ENCODE measurements at regions of chr3 and their contacts with region 1.

Region 1: GRCh38 chr3:197674741-197675562 is 61.8 kb downstream of the RUBCN start:
- DNase-seq: no peak
- H3K4me3 ChIP-seq: no peak overlapping the region
- H3K27ac ChIP-seq: no peak overlapping the region
- H3K4me1 ChIP-seq: no peaks in the 10 kb centered on the region
- H3K27me3 ChIP-seq: no peaks in the 10 kb centered on the region
- CTCF ChIP-seq: no peak

Region 2: GRCh38 chr3:196942226-196942914 is 732.6 kb before region 1 on chr3 and contains the start of gene NCBP2:
- CTCF ChIA-PET with region 1: no interaction called
- dilution Hi-C with region 1: loop called (anchors 10 kb)
- in situ Hi-C with region 1: no loop called
- intact Hi-C with region 1: no loop called
- DNase-seq: peak; percentile 98
- H3K4me3 ChIP-seq: peak within 1 kb of the TSS; percentile 78 to 96 (median 86)
- H3K27ac ChIP-seq: peak within 1 kb of the TSS; percentile 79
- H3K4me1 ChIP-seq: peaks cover 12% of the 10 kb centered on the region
- H3K27me3 ChIP-seq: no peaks in the 10 kb centered on the region
- CTCF ChIP-seq: peak; percentile 70 to 78
- total RNA-seq, gene NCBP2: 47.5 to 77.0 TPM

Region 3: DNA sequence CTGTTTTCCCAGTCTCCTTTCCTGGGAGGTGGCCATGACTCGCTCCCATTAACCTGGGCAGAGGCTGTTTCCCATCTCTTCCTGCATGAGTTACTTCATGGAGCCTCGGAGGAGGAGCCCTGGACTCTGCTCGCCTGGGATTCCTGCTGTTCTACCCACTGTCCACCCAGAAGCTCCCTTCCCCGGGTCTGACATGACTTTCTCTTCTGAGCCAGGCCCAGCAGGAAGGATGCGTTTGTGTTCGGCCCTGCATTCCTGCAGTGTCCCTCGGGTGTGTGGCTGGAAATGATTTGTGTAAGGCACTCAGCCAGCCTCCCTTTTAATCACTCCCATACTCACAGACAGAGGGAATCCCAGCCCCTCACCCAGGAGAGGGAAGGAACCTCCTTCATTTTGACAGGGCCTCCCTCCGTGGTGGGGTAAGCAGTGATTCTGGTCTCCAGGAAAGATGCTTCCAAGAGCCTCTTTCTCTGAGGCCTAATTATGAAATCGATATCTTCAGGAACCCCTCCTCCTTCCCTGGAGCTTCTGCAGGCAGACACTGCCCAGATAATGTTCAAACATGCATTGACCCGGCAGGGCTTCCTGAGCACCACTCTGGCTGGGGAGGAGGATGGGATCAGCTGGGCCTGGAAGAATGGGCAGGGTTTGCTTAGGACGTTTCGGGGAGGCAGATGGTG is 335.0 kb before region 1 on chr3:
- CTCF ChIA-PET with region 1: no interaction called
- dilution Hi-C with region 1: loop called (anchors 10 kb)
- in situ Hi-C with region 1: no loop called
- intact Hi-C with region 1: no loop called
- DNase-seq: peak; percentile 13
- H3K4me3 ChIP-seq: no peak overlapping the region
- H3K27ac ChIP-seq: no peak overlapping the region
- H3K4me1 ChIP-seq: peaks cover 11% of the 10 kb centered on the region
- H3K27me3 ChIP-seq: no peaks in the 10 kb centered on the region
- CTCF ChIP-seq: no peak

Region 4: GRCh38 chr3:197599089-197599765 is 75.7 kb before region 1 on chr3:
- CTCF ChIA-PET with region 1: no interaction called
- dilution Hi-C with region 1: loop called (anchors 5 kb)
- in situ Hi-C with region 1: no loop called
- intact Hi-C with region 1: no loop called
- DNase-seq: peak; percentile 50
- H3K4me3 ChIP-seq: peak overlapping the region in 2 of 3 experiments; percentile 13 to 18
- H3K27ac ChIP-seq: peak overlapping the region; percentile 3
- H3K4me1 ChIP-seq: peaks cover 11% of the 10 kb centered on the region
- H3K27me3 ChIP-seq: no peaks in the 10 kb centered on the region
- CTCF ChIP-seq: peak; percentile 85 to 86

Region 5: DNA sequence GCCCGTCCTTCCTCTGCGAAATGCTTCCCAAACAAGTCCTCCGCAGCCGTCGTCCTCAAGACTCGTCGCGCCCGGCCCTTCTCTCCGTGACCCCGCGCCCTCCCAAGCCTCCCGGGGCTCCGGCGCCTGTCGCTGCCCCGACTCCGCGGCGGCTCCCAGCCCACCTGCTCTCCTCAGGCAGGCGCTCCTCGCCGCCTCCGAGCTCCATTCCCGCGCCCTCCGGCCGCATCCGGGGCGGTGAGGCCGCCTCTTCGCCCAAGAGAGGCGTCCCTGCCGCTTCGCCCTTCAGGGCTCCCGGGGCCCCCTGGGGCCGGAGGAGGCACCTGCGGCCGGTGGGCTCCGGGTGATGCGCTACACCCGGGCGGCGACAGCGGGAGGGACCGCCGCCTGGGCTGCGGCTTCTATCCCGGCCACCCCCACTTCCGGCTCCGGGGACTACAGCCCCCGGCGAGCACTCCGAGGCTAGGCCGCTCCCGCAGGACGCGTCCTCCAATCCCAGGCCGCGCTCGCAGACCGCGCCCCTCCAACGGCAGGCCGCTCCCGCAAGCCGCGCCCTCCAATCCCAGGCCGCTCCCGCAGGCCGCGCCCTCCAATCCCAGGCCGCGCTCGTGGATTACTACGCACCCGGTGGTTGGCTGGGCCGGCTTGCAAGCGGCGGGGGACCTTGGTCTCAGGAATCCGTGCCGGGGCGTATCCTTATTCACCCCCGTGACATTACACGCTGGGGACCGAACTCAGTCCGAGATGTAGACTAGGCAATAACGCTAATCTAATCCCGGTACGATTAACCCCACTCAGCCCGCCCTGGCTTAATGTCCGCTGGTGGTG is 61.8 kb after region 1 on chr3 and contains the start of gene RUBCN:
- CTCF ChIA-PET with region 1: no interaction called
- dilution Hi-C with region 1: loop called (anchors 10 kb)
- in situ Hi-C with region 1: no loop called
- intact Hi-C with region 1: loop called (anchors 5 kb)
- DNase-seq: peak; percentile 96
- H3K4me3 ChIP-seq: peak within 1 kb of the TSS; percentile 53 to 83 (median 81)
- H3K27ac ChIP-seq: peak within 1 kb of the TSS; percentile 65
- H3K4me1 ChIP-seq: peaks cover 15% of the 10 kb centered on the region
- H3K27me3 ChIP-seq: no peaks in the 10 kb centered on the region
- CTCF ChIP-seq: no peak
- total RNA-seq, gene RUBCN: 21.0 to 32.6 TPM

Measured in mammary epithelial cell (primary cell).